ENCODE measurements at regions of chr5 and their contacts with region 1.

Region 1: DNA sequence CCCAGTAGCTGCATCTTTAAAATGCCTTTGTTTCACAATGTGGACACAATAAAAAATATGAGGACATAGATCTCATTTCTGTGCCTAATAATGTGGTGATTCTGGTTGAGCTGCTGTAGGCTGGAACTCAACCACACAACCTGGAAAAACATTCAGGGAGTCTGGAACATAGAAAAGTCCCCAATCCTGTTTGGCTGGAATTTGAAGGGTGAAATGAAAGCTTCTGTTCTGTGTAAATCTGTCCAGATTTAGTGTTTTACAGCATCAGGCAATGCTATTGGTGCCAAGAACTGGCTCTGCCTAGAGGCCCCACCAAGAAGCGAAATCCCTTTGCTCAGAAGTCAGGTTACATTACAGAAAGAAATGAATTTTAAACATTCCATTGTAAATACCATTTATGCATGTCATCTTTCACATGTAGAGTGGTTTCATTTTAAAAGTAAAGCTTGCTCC is 56.2 kb downstream of the TMEM174 start:
- DNase-seq: no peak
- H3K4me3 ChIP-seq: no peak overlapping the region
- H3K27ac ChIP-seq: no peak overlapping the region
- H3K4me1 ChIP-seq: peaks cover 29% of the 10 kb centered on the region
- H3K27me3 ChIP-seq: peaks cover 100% of the 10 kb centered on the region
- CTCF ChIP-seq: no peak

Region 2: DNA sequence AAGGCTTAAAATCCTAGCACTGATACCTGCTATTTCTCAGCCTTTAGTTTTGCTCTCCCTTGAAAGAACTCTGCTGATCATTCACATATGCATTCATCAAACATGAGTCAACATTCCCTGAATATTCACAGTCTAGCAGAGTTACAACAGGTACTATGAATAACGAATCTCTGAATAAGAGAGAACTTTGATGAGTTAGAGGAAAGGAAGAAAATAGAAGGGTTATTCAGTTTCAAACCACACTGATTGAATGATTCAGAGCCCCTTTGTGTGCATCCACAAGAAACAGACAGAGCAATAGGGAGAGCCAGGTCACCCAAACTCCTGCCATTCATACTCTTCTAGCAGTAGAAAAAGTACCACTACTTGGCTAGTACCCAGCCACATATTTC is 183.4 kb after region 1 on chr5:
- intact Hi-C with region 1: no loop called
- DNase-seq: no peak
- H3K4me3 ChIP-seq: no peak overlapping the region
- H3K27ac ChIP-seq: no peak overlapping the region
- H3K4me1 ChIP-seq: peaks cover 5% of the 10 kb centered on the region
- H3K27me3 ChIP-seq: peaks cover 90% of the 10 kb centered on the region
- CTCF ChIP-seq: no peak

Region 3: GRCh38 chr5:73454351-73455036 is 225.3 kb after region 1 on chr5:
- intact Hi-C with region 1: loop called (anchors 10 kb)
- DNase-seq: no peak
- H3K4me3 ChIP-seq: no peak overlapping the region
- H3K27ac ChIP-seq: no peak overlapping the region
- H3K4me1 ChIP-seq: peaks cover 10% of the 10 kb centered on the region
- H3K27me3 ChIP-seq: peaks cover 100% of the 10 kb centered on the region
- CTCF ChIP-seq: peak; percentile 75